HepG2 (cell line): ENCODE measurements at regions of chr6 and their contacts with region 1.

Region 1: GRCh38 chr6:143842902-143843676 is at the start of gene LTV1:
- DNase-seq: peak; percentile 98
- ATAC-seq: peak; percentile 97
- H3K4me3 ChIP-seq: peak within 1 kb of the TSS; percentile 75 to 88 (median 85)
- H3K27ac ChIP-seq: peak within 1 kb of the TSS; percentile 95
- H3K4me1 ChIP-seq: peaks cover 39% of the 10 kb centered on the region
- H3K27me3 ChIP-seq: no peaks in the 10 kb centered on the region; a peak in 1 of 5 replicates
- CTCF ChIP-seq: peak; percentile 40
- EP300 ChIP-seq: no peak; a peak in 2 of 4 replicates
- POLR2A ChIP-seq: peak; percentile 88 to 94
- RAD21 ChIP-seq: peak; percentile 71
- total RNA-seq, gene LTV1: 85.8 and 122 TPM in 2 replicates

Region 2: GRCh38 chr6:143536865-143537691 is 306.0 kb before region 1 on chr6:
- CTCF ChIA-PET with region 1: no interaction called
- POLR2A ChIA-PET with region 1: interaction called, 11 read pairs
- in situ Hi-C with region 1: no loop called
- intact Hi-C with region 1: no loop called
- DNase-seq: peak; percentile 38
- ATAC-seq: peak; percentile 82
- H3K4me3 ChIP-seq: peak overlapping the region; percentile 68 to 80 (median 69)
- H3K27ac ChIP-seq: no peak overlapping the region
- H3K4me1 ChIP-seq: peaks cover 32% of the 10 kb centered on the region
- H3K27me3 ChIP-seq: peaks cover 0 to 25% of the 10 kb centered on the region in 2 experiments; a peak in 4 of 5 replicates
- CTCF ChIP-seq: peak; percentile 69
- EP300 ChIP-seq: no peak
- POLR2A ChIP-seq: no peak
- RAD21 ChIP-seq: peak; percentile 38; the same call in 1 of the 2 replicates

Region 3: DNA sequence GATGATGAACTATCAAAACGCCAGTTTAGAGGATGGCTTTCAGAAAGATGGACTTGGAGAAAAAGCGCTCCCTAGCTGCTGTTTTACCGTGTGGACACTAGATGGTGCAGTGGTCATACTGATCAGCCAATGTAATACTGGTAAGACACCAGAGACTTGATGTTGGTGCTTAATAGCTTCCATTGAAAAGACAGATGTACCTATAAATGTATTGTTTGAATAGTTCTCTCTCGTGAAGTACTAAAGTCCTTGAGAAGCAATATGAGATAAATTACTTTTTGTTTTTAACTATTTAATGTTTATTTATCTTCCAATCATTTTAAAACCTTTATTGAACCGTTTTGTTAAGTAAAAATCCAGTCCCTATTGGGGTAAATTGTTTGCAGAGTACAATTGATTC is 267.6 kb before region 1 on chr6:
- CTCF ChIA-PET with region 1: no interaction called
- POLR2A ChIA-PET with region 1: interaction called, 13 read pairs
- in situ Hi-C with region 1: loop called (anchors 5 kb)
- intact Hi-C with region 1: loop called (anchors 1 kb)
- DNase-seq: peak; percentile 83
- ATAC-seq: peak; percentile 86
- H3K4me3 ChIP-seq: no peak overlapping the region
- H3K27ac ChIP-seq: no peak overlapping the region
- H3K4me1 ChIP-seq: no peaks in the 10 kb centered on the region
- H3K27me3 ChIP-seq: no peaks in the 10 kb centered on the region
- CTCF ChIP-seq: peak; percentile 94
- EP300 ChIP-seq: no peak
- POLR2A ChIP-seq: no peak
- RAD21 ChIP-seq: peak; percentile 95

Region 4: DNA sequence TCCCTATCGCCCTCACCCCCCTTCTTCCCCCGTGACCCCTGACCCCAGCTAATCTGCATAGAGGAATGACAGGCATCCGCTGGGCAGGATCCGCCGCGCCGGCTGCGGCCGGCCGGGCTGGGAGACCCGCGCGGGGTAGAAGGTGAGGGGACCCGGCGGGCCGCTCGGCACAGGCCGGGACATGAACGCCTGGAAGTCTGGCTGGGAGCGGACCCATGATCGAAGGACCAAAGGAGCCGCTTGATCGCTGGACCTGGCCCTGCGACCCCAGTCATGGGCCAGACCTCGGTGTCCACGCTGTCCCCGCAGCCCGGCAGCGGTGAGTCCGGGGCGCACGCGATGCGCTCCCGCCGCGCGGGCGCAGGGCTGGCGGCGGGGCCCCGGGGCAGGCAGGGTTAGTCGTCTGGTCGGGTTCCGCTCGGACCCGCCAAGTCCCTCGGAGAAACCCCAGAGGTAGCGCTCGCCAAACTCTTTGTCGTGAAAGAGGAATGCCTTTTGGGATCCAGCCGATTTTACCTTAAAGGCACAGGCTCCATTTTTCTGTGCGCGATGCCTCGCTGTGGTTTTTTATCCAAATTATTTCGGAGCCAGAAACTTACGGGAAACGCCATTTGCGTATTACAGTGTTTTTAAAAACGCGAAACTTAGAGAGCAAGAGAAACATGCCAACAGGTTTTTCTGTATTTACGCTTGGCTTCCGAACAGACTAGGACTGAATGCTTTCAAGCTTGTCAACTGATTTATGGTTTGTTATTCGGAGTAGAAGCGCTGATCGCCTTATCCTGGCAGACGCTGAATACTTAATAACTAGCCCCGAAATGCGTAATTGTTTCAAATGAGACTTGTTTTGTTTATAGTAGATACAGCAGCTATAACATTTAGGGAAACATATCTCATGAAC is 164.9 kb before region 1 on chr6 and contains the start of gene PHACTR2:
- CTCF ChIA-PET with region 1: no interaction called
- POLR2A ChIA-PET with region 1: interaction called, 10 read pairs
- in situ Hi-C with region 1: loop called (anchors 5 kb)
- intact Hi-C with region 1: loop called (anchors 5 kb)
- DNase-seq: peak; percentile 76
- ATAC-seq: peak; percentile 97
- H3K4me3 ChIP-seq: peak within 1 kb of the TSS; percentile 79 to 90 (median 87)
- H3K27ac ChIP-seq: peak within 1 kb of the TSS; percentile 68
- H3K4me1 ChIP-seq: peaks cover 76% of the 10 kb centered on the region
- H3K27me3 ChIP-seq: no peaks in the 10 kb centered on the region
- CTCF ChIP-seq: peak; percentile 22; the same call in 1 of the 2 replicates
- EP300 ChIP-seq: peak; percentile 17 to 18; a peak in 1 of 4 replicates
- POLR2A ChIP-seq: peak; percentile 72 to 85
- RAD21 ChIP-seq: peak; percentile 76
- total RNA-seq, gene PHACTR2: 28.2 and 39.1 TPM in 2 replicates

Region 5: DNA sequence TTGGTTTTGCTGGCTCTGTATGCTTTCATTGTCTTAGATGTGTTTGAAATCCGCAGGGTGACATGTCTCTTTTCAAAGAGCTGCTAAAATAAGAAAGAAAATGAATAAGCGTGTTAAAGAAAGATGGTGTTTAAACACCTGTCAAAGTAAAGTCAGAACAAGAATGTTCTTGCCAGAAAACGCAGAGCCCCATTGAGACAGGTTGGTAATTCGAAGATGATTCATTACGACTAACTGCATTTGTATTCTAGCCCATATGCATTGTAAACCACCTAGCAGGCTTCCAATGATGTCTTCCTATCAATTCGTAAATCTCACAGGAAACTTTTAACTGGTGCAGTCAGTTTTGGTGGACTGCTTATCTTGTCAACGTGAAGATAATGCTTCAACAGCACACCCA is 148.5 kb before region 1 on chr6:
- CTCF ChIA-PET with region 1: no interaction called
- POLR2A ChIA-PET with region 1: interaction called, 14 read pairs
- in situ Hi-C with region 1: no loop called
- intact Hi-C with region 1: loop called (anchors 5 kb)
- DNase-seq: no peak
- ATAC-seq: no peak
- H3K4me3 ChIP-seq: no peak overlapping the region
- H3K27ac ChIP-seq: no peak overlapping the region
- H3K4me1 ChIP-seq: peaks cover 95% of the 10 kb centered on the region
- H3K27me3 ChIP-seq: no peaks in the 10 kb centered on the region
- CTCF ChIP-seq: no peak
- EP300 ChIP-seq: no peak
- POLR2A ChIP-seq: no peak
- RAD21 ChIP-seq: no peak

Region 6: GRCh38 chr6:143859888-143860660 is 17.0 kb after region 1 on chr6:
- CTCF ChIA-PET with region 1: no interaction called
- POLR2A ChIA-PET with region 1: interaction called, 11 read pairs
- in situ Hi-C with region 1: no loop called
- intact Hi-C with region 1: no loop called
- DNase-seq: no peak
- ATAC-seq: no peak
- H3K4me3 ChIP-seq: no peak overlapping the region
- H3K27ac ChIP-seq: no peak overlapping the region
- H3K4me1 ChIP-seq: peaks cover 5% of the 10 kb centered on the region; the same call in 1 of the 2 replicates
- H3K27me3 ChIP-seq: no peaks in the 10 kb centered on the region
- CTCF ChIP-seq: no peak
- EP300 ChIP-seq: no peak
- POLR2A ChIP-seq: no peak
- RAD21 ChIP-seq: no peak

Region 7: DNA sequence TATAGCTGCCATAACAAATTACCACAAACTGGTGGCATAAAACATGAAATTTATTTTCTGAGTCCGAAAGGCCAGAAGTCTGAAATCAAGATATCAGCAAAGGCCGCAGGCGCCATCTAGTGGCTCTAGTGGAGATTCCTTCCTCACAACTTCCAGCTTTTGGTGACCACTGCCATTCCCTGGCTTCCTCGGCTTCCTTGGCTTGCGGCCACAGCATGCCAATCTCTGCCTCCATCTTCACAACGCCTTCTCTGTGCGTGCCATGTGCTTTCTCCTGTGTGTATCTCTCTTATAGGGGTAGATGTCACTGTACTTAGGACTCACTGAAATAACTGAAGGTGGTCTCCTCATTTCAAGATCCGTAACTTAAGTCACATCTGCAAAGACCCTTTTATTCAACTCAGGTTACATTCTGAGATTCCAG is 170.4 kb after region 1 on chr6:
- CTCF ChIA-PET with region 1: no interaction called
- POLR2A ChIA-PET with region 1: no interaction called
- in situ Hi-C with region 1: no loop called
- intact Hi-C with region 1: loop called (anchors 1 kb)
- DNase-seq: peak; percentile 81
- ATAC-seq: peak; percentile 79
- H3K4me3 ChIP-seq: no peak overlapping the region
- H3K27ac ChIP-seq: no peak overlapping the region
- H3K4me1 ChIP-seq: 0 out of 2 replicates have a peak, but pooled peaks cover 2% of the 10 kb centered on the region
- H3K27me3 ChIP-seq: peaks cover 2% of the 10 kb centered on the region in 2 experiments; a peak in 3 of 5 replicates
- CTCF ChIP-seq: peak; percentile 95
- EP300 ChIP-seq: no peak
- POLR2A ChIP-seq: no peak
- RAD21 ChIP-seq: peak; percentile 94